ENCODE measurements at regions of chrX and their contacts with region 1.

Region 1: GRCh38 chrX:39242187-39242586 is 440.9 kb downstream of the MID1IP1 start:
- DNase-seq: peak; percentile 14
- ATAC-seq: peak; percentile 72
- H3K4me3 ChIP-seq: no peak overlapping the region
- H3K27ac ChIP-seq: no peak overlapping the region
- H3K4me1 ChIP-seq: no peaks in the 10 kb centered on the region
- H3K27me3 ChIP-seq: no peaks in the 10 kb centered on the region
- CTCF ChIP-seq: peak; percentile 49
- EP300 ChIP-seq: no peak
- POLR2A ChIP-seq: no peak
- RAD21 ChIP-seq: no peak

Region 2: GRCh38 chrX:38754102-38754790 is 487.9 kb before region 1 on chrX:
- CTCF ChIA-PET with region 1: interaction called, 10 read pairs
- POLR2A ChIA-PET with region 1: no interaction called
- in situ Hi-C with region 1: loop called (anchors 5 kb)
- intact Hi-C with region 1: no loop called
- DNase-seq: peak; percentile 19
- ATAC-seq: no peak
- H3K4me3 ChIP-seq: no peak overlapping the region
- H3K27ac ChIP-seq: no peak overlapping the region
- H3K4me1 ChIP-seq: no peaks in the 10 kb centered on the region
- H3K27me3 ChIP-seq: no peaks in the 10 kb centered on the region
- CTCF ChIP-seq: peak; percentile 52
- EP300 ChIP-seq: no peak
- POLR2A ChIP-seq: no peak
- RAD21 ChIP-seq: 0 out of 2 replicates have a peak, but pooled peaks have one; percentile 20

Region 3: DNA sequence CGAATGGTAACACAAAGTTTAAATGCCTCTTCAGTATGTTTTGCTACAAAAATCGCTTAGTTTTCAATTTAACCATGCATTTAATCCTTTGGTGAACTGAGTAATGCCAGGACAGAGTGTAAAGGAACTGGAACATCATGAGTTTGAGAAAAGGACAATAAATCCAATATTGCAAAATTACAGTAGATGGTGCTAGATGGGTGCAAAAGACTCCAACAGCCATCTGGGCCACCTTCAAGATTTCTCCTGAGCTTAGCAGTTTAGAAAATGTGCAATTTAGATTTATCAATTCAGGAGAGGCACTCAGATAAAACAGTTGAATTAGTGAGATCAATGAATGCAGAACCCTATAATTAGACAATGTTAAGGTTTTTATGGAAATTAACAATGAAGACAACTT is 474.1 kb before region 1 on chrX:
- CTCF ChIA-PET with region 1: no interaction called
- POLR2A ChIA-PET with region 1: no interaction called
- in situ Hi-C with region 1: no loop called
- intact Hi-C with region 1: loop called (anchors 5 kb)
- DNase-seq: no peak
- ATAC-seq: no peak
- H3K4me3 ChIP-seq: no peak overlapping the region
- H3K27ac ChIP-seq: no peak overlapping the region
- H3K4me1 ChIP-seq: no peaks in the 10 kb centered on the region
- H3K27me3 ChIP-seq: no peaks in the 10 kb centered on the region; a peak in 1 of 5 replicates
- CTCF ChIP-seq: peak; percentile 33
- EP300 ChIP-seq: no peak
- POLR2A ChIP-seq: no peak
- RAD21 ChIP-seq: no peak

Region 4: GRCh38 chrX:39261446-39262147 is 19.4 kb after region 1 on chrX:
- CTCF ChIA-PET with region 1: no interaction called
- POLR2A ChIA-PET with region 1: no interaction called
- in situ Hi-C with region 1: no loop called
- intact Hi-C with region 1: no loop called
- DNase-seq: peak; percentile 0
- ATAC-seq: no peak
- H3K4me3 ChIP-seq: no peak overlapping the region
- H3K27ac ChIP-seq: no peak overlapping the region
- H3K4me1 ChIP-seq: no peaks in the 10 kb centered on the region
- H3K27me3 ChIP-seq: no peaks in the 10 kb centered on the region
- CTCF ChIP-seq: peak; percentile 50
- EP300 ChIP-seq: no peak
- POLR2A ChIP-seq: no peak
- RAD21 ChIP-seq: no peak

Region 5: DNA sequence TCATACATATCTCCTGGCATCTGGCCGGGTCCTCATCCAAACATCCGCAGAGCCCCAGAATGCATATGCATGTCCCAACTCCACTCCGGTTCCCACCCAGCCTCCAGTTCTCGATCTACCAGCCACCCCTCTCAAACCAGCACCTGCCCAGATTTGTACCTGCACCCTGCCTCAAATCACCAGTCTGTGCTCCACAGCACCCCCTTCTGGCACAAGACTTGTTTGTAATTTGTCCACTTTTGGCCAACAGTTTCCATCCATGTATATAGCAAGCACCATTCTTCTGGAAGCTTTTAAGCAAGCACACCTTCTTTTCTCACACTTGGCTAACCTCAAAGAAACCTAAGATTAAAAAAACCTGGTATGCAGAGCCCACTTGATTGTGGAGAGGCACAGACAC is 203.1 kb after region 1 on chrX:
- CTCF ChIA-PET with region 1: no interaction called
- POLR2A ChIA-PET with region 1: no interaction called
- in situ Hi-C with region 1: no loop called
- intact Hi-C with region 1: no loop called
- DNase-seq: no peak
- ATAC-seq: no peak
- H3K4me3 ChIP-seq: no peak overlapping the region
- H3K27ac ChIP-seq: no peak overlapping the region
- H3K4me1 ChIP-seq: no peaks in the 10 kb centered on the region
- H3K27me3 ChIP-seq: no peaks in the 10 kb centered on the region
- CTCF ChIP-seq: peak; percentile 43
- EP300 ChIP-seq: no peak
- POLR2A ChIP-seq: no peak
- RAD21 ChIP-seq: no peak